ENCODE measurements at regions of chr18 and their contacts with region 1.

Region 1: DNA sequence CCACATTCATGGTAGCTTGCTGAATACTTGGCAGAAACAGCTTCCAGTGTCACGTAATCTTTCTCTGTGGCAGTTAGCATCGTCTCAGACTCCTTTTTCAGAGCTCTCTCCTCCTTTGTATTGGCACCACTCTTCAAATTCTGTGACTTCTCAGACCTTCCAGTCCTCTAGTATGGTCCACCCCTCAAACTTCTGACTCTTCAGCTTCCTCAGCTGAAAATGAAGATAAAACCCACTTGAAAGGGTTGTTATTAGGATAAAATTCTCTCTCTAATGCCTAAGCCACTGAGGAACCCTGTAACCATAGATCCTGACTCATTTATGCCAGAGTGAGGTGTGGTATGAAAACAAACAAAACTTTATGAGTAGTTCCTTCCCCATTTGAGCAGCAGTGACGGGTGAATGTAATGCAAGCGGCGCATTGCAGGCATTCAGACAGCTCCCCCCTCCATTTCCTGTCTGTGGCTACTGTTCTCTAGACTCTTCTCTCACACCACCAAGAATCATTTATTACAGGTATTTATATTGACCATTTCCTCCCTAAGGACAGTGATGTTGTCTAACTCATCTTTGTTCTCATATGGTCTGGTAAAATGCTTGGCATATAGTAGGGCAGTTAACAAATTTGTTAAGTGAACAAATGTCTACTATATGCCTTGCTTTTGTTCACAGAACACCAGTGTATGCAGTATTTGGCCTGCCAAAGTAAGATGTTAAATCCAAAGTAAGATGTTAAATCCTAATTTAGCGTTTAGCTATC is 35.3 kb downstream of the GALNT1 start:
- DNase-seq: peak in 3 of 5 donors; percentile 16 to 39 (median 25)
- ATAC-seq: peak in 3 of 4 donors; percentile 49 to 66 (median 63)
- H3K4me3 ChIP-seq: no peak overlapping the region
- H3K27ac ChIP-seq: peak overlapping the region in 3 of 12 donors; percentile 14 to 44 (median 20)
- H3K4me1 ChIP-seq: peaks cover 4 to 62% (median 39%) of the 10 kb centered on the region in 12 donors
- H3K27me3 ChIP-seq: no peaks in the 10 kb centered on the region
- CTCF ChIP-seq: no peak
- POLR2A ChIP-seq: no peak

Region 2: DNA sequence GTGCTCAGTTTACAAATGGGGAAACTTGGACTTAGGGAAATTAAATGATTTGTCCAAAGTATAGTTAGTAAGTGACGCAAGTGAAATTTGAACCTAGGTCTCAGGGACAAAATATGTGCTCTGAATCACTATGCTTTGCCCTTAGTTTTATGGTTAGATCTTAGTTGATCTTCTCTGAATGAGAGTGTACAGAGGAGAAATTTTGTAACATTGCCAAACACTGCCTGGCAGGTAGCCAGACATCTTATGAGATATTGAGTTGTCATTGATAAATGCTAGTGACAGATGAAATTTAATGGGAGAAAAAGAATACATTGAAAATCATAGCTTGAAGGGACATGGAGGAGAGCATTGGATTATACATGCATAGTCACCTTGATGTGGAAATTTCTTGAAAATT is 56.1 kb after region 1 on chr18:
- intact Hi-C with region 1: loop called in 1 of 10 experiments (anchors 10 kb)
- DNase-seq: no peak
- ATAC-seq: no peak
- H3K4me3 ChIP-seq: no peak overlapping the region
- H3K27ac ChIP-seq: no peak overlapping the region
- H3K4me1 ChIP-seq: no peaks in the 10 kb centered on the region
- H3K27me3 ChIP-seq: no peaks in the 10 kb centered on the region
- CTCF ChIP-seq: no peak
- POLR2A ChIP-seq: no peak